Natural killer cell (primary cell): ENCODE measurements at regions of chr14 and their contacts with region 1.

Region 1: GRCh38 chr14:37246427-37246914 is 48.7 kb downstream of the MIPOL1 start:
- DNase-seq: peak in 1 of 2 donors; percentile 41
- ATAC-seq: no peak
- H3K4me3 ChIP-seq: no peak overlapping the region
- H3K4me3 Mint-ChIP-seq: no peak overlapping the region
- H3K27ac ChIP-seq: no peak overlapping the region
- H3K27ac Mint-ChIP-seq: no peak overlapping the region
- H3K4me1 ChIP-seq: no peaks in the 10 kb centered on the region
- H3K4me1 Mint-ChIP-seq: no peaks in the 10 kb centered on the region
- H3K27me3 ChIP-seq: no peaks in the 10 kb centered on the region
- H3K27me3 Mint-ChIP-seq: no peaks in the 10 kb centered on the region
- CTCF ChIP-seq: peak; percentile 57

Region 2: GRCh38 chr14:37168721-37169120 is 77.8 kb before region 1 on chr14:
- intact Hi-C with region 1: no loop called
- DNase-seq: no peak
- ATAC-seq: no peak
- H3K4me3 ChIP-seq: no peak overlapping the region
- H3K4me3 Mint-ChIP-seq: no peak overlapping the region
- H3K27ac ChIP-seq: no peak overlapping the region
- H3K27ac Mint-ChIP-seq: no peak overlapping the region
- H3K4me1 ChIP-seq: peaks cover 3% of the 10 kb centered on the region
- H3K4me1 Mint-ChIP-seq: no peaks in the 10 kb centered on the region
- H3K27me3 ChIP-seq: peaks cover 6% of the 10 kb centered on the region
- H3K27me3 Mint-ChIP-seq: no peaks in the 10 kb centered on the region
- CTCF ChIP-seq: no peak

Region 3: GRCh38 chr14:37721976-37722659 is 475.6 kb after region 1 on chr14:
- intact Hi-C with region 1: no loop called
- DNase-seq: no peak
- ATAC-seq: no peak
- H3K4me3 ChIP-seq: no peak overlapping the region
- H3K4me3 Mint-ChIP-seq: no peak overlapping the region
- H3K27ac ChIP-seq: no peak overlapping the region
- H3K27ac Mint-ChIP-seq: no peak overlapping the region
- H3K4me1 ChIP-seq: no peaks in the 10 kb centered on the region
- H3K4me1 Mint-ChIP-seq: no peaks in the 10 kb centered on the region
- H3K27me3 ChIP-seq: no peaks in the 10 kb centered on the region
- H3K27me3 Mint-ChIP-seq: no peaks in the 10 kb centered on the region
- CTCF ChIP-seq: no peak

Region 4: DNA sequence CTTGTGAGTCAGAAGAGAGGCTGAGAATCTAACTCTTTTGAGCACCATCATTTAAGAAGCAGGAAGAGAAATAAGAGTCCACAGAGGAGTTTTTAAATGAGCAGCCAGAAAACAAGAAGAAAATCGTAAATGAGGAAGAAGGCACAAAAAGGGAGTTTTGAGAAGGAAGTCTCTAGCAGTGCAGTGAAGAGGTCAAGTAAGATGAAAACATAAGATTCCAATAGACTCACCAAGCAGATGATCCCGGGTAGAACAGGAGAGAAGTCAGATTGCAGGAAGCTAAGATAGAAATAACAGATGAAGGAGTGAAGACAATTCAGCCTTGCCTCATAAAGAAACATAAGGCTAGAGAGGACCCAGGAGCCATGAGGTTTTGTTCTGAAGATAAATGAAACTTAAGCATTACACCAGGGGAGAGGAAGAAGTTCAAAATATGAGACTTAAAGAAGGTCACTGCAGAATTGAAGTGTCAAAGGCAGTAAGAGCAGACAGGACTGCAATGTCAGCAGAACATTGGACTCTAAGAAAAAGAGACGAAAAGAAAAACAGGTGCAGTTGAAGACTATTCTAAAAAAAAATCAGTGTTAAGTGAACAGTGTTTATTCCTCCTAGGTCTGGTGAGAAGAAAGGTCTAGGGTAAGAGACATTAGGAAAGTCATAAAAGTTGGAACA is 1627.6 kb after region 1 on chr14:
- intact Hi-C with region 1: loop called (anchors 10 kb)
- DNase-seq: no peak
- ATAC-seq: no peak
- H3K4me3 ChIP-seq: no peak overlapping the region
- H3K4me3 Mint-ChIP-seq: no peak overlapping the region
- H3K27ac ChIP-seq: no peak overlapping the region
- H3K27ac Mint-ChIP-seq: no peak overlapping the region
- H3K4me1 ChIP-seq: no peaks in the 10 kb centered on the region
- H3K4me1 Mint-ChIP-seq: no peaks in the 10 kb centered on the region
- H3K27me3 ChIP-seq: no peaks in the 10 kb centered on the region
- H3K27me3 Mint-ChIP-seq: peaks cover 3 to 8% of the 10 kb centered on the region in 2 donors
- CTCF ChIP-seq: no peak